ENCODE measurements at regions of chr1 and their contacts with region 1.

Region 1: GRCh38 chr1:55277377-55278130 is 62.4 kb upstream of the USP24 start:
- DNase-seq: no peak
- H3K4me3 ChIP-seq: no peak overlapping the region
- CTCF ChIP-seq: peak; percentile 82

Region 2: GRCh38 chr1:55140546-55140983 is 137.0 kb before region 1 on chr1:
- CTCF ChIA-PET with region 1: interaction called, 331 read pairs
- POLR2A ChIA-PET with region 1: no interaction called
- DNase-seq: peak; percentile 86
- H3K4me3 ChIP-seq: no peak overlapping the region
- CTCF ChIP-seq: peak; percentile 78

Region 3: GRCh38 chr1:55155514-55155913 is 122.0 kb before region 1 on chr1:
- CTCF ChIA-PET with region 1: interaction called, 17 read pairs
- POLR2A ChIA-PET with region 1: no interaction called
- DNase-seq: no peak
- H3K4me3 ChIP-seq: no peak overlapping the region
- CTCF ChIP-seq: no peak

Region 4: DNA sequence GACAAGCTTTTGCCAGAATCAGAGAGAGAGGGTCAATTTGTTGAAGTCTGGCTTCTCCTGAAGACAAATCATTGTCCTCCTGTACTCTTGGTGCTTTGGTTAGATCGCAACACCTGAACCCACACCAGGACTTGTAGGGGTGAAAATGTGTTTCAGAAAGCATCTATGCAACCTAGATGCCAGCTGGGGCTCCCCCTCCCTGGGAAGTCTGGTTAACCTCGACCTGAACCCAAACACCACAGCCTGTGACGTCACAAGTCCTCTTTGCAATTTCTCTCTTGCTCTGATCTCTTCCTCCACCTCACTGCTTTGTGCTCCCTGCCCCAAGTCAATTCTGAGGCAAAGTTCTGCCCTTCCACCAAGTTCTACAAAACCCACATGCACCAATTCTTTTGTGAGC is 19.6 kb before region 1 on chr1:
- CTCF ChIA-PET with region 1: interaction called, 18 read pairs
- POLR2A ChIA-PET with region 1: no interaction called
- DNase-seq: no peak
- H3K4me3 ChIP-seq: no peak overlapping the region
- CTCF ChIP-seq: no peak

Region 5: DNA sequence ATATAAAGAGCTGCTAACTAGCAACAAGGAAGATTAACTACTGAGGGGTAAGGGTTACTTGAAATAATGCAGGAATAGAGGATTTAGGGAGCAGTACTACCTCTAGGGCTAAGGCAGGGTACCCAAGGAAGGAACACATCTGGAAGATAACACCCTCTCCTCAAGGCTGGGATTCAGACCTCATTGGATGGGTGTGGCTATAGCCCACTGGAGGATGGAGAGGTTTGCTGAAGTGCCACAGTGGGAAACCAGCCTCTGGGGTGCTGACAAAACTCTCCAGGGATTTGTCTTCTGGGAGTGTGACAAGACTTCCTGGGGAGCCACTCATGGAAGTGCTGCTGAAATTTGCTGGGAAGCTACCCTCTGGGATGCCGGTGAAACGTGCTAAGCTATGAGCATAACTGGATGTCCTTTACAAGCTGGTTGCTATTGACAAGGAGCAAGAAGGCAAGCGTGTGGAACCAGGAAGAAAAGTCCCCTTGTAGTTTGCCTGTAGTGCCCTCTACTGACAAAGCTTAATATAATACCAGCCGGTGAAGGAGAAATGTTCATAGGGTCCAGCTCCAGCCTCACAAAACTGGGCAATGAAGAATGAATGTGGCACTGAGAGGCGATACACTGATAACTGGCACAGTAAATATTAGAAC is 60.4 kb after region 1 on chr1:
- CTCF ChIA-PET with region 1: interaction called, 99 read pairs
- POLR2A ChIA-PET with region 1: no interaction called
- DNase-seq: peak; percentile 23
- H3K4me3 ChIP-seq: no peak overlapping the region
- CTCF ChIP-seq: peak; percentile 43

Measured in AG04449 (cell line).